ENCODE measurements at regions of chr13 and their contacts with region 1.

Region 1: GRCh38 chr13:98033277-98034247 is 80.1 kb downstream of the IPO5 start:
- DNase-seq: peak; percentile 87
- H3K4me3 ChIP-seq: no peak overlapping the region
- H3K27ac ChIP-seq: no peak overlapping the region
- H3K4me1 ChIP-seq: peaks cover 22% of the 10 kb centered on the region
- H3K27me3 ChIP-seq: no peaks in the 10 kb centered on the region
- CTCF ChIP-seq: peak; percentile 60

Region 2: GRCh38 chr13:98397221-98397620 is 363.7 kb after region 1 on chr13:
- CTCF ChIA-PET with region 1: no interaction called
- POLR2A ChIA-PET with region 1: no interaction called
- intact Hi-C with region 1: loop called (anchors 10 kb)
- DNase-seq: peak; percentile 42
- H3K4me3 ChIP-seq: no peak overlapping the region
- H3K27ac ChIP-seq: no peak overlapping the region
- H3K4me1 ChIP-seq: peaks cover 25% of the 10 kb centered on the region
- H3K27me3 ChIP-seq: no peaks in the 10 kb centered on the region
- CTCF ChIP-seq: peak; percentile 49

Region 3: DNA sequence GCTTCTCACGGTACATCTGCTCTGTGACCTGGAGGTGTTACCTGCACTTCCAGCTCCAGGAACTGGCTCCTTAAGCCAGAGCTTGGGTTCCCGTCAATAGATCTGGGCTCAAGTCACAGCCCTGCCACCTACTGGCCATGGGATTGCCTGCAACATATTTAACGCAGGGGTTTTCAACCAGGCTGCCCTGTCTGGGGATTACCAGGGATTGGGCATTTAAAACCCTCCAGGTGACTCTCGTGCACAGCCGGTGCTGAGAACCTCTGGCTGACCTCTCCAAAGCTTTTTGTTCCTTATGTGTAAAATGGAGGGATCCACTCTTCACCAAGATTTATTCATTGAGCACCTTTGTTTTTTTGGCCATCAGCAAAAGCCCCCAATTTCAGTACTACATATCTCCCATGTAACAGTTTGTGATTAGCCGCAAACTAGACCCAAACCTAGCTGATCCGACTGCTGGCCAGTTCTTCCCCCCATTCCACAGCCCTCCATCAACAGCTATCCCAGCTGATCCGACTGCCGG is 620.0 kb after region 1 on chr13:
- CTCF ChIA-PET with region 1: interaction called, 4 read pairs
- POLR2A ChIA-PET with region 1: no interaction called
- intact Hi-C with region 1: loop called (anchors 1 kb)
- DNase-seq: peak; percentile 76
- H3K4me3 ChIP-seq: no peak overlapping the region
- H3K27ac ChIP-seq: no peak overlapping the region
- H3K4me1 ChIP-seq: no peaks in the 10 kb centered on the region
- H3K27me3 ChIP-seq: no peaks in the 10 kb centered on the region
- CTCF ChIP-seq: peak; percentile 92

Region 4: GRCh38 chr13:98821372-98822224 is 788.0 kb after region 1 on chr13:
- CTCF ChIA-PET with region 1: interaction called, 10 read pairs
- POLR2A ChIA-PET with region 1: no interaction called
- intact Hi-C with region 1: no loop called
- DNase-seq: peak; percentile 87
- H3K4me3 ChIP-seq: no peak overlapping the region
- H3K27ac ChIP-seq: peak overlapping the region; percentile 86
- H3K4me1 ChIP-seq: peaks cover 40% of the 10 kb centered on the region
- H3K27me3 ChIP-seq: no peaks in the 10 kb centered on the region
- CTCF ChIP-seq: no peak